ENCODE measurements at regions of chr1 and their contacts with region 1.

Region 1: DNA sequence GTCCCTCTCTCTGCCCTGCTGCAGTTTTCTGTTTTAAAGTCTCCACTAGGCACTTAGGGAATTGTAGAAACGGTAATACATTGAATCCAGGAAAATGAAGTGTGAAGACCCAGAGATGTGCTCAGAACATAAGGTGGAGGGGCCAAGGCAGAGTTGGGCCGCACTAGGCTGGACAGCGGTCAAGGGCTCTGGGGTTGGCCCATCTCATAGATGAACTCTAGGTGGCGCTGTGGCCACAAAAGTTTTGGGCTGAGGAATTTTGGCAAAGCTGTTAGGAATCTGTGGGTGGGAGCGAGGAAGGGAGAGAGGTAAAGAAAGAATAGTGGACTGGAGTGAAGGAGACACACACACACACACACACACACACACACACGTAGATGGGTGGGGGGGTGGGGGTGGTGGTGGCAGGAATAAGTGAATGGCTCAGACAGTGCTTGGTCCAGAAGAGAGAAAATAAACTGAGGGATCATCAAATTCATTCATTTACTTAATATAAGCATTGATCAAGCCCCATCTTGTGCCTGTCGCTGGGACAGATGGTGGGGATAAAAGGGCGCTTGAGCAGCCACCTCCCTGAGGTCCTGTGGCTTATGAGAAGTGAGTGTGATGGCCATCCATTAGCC is 258.5 kb downstream of the TRABD2B start:
- DNase-seq: peak; percentile 59 to 81 (median 78)
- ATAC-seq: peak; percentile 85
- H3K4me3 ChIP-seq: no peak overlapping the region
- H3K27ac ChIP-seq: no peak overlapping the region
- H3K4me1 ChIP-seq: no peaks in the 10 kb centered on the region
- H3K27me3 ChIP-seq: no peaks in the 10 kb centered on the region

Region 2: GRCh38 chr1:48061162-48062136 is 322.8 kb after region 1 on chr1:
- intact Hi-C with region 1: loop called in 1 of 4 experiments (anchors 5 kb)
- DNase-seq: peak in 2 of 3 donors; percentile 43 to 53
- ATAC-seq: peak; percentile 64 to 72
- H3K4me3 ChIP-seq: no peak overlapping the region
- H3K27ac ChIP-seq: no peak overlapping the region
- H3K4me1 ChIP-seq: no peaks in the 10 kb centered on the region
- H3K27me3 ChIP-seq: no peaks in the 10 kb centered on the region

Measured in right cardiac atrium (tissue), 5 donors.